Right ventricle myocardium inferior (tissue), 1 donor: ENCODE measurements at regions of chr12 and their contacts with region 1.

Region 1: GRCh38 chr12:110742718-110743570 is at the start of gene PPP1CC:
- DNase-seq: peak; percentile 98
- ATAC-seq: peak; percentile 97
- total RNA-seq, gene PPP1CC: 163 TPM

Region 2: DNA sequence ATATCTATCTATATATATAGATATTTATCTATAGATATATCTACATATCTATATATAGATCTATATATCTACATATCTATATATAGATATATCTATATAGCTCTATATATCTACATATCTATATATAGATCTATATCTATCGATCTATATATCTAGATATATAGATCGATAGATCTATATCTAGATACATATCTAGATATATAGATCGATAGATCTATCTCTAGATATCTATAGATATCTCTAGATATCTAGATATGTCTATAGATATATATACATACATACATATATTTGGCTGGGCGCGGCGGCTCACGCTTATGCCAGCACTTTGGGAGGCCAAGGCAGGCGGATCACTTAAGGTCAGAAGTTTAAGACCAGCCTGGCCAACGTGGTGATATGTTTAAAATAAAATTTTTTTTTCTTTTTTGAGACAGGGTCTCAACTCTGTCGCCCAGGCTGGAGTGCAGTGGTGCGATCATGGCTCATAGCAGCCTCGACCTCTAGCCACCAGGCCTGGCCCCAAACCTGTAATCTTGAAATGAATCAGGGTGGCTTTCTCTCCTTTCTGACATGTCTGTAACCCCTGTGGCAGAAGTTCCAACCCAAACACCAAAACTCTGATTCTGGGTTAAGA is 310.9 kb before region 1 on chr12:
- intact Hi-C with region 1: no loop called
- DNase-seq: no peak
- ATAC-seq: no peak

Region 3: GRCh38 chr12:110639336-110640141 is 103.4 kb before region 1 on chr12:
- intact Hi-C with region 1: loop called (anchors 5 kb)
- DNase-seq: no peak
- ATAC-seq: no peak

Region 4: DNA sequence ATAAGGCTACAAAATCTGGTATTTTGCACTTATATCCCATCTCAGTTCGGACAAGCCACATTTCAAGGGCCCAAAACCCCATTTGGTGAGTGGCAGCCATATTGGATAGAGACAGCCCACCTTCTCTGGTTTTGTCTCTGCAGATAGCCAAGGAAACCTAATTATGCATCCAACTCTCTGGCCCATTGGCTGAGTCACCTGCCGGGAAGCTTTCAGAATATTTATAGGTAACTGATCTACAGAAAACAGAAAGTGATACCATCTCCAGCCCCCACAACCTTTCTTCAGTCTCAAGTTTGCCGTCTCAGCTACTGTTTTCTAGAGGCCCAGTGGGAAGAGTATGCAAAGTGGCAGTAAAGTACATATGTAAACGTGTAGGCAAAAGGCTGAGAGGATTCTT is 33.5 kb after region 1 on chr12:
- intact Hi-C with region 1: no loop called
- DNase-seq: no peak
- ATAC-seq: no peak

Region 5: DNA sequence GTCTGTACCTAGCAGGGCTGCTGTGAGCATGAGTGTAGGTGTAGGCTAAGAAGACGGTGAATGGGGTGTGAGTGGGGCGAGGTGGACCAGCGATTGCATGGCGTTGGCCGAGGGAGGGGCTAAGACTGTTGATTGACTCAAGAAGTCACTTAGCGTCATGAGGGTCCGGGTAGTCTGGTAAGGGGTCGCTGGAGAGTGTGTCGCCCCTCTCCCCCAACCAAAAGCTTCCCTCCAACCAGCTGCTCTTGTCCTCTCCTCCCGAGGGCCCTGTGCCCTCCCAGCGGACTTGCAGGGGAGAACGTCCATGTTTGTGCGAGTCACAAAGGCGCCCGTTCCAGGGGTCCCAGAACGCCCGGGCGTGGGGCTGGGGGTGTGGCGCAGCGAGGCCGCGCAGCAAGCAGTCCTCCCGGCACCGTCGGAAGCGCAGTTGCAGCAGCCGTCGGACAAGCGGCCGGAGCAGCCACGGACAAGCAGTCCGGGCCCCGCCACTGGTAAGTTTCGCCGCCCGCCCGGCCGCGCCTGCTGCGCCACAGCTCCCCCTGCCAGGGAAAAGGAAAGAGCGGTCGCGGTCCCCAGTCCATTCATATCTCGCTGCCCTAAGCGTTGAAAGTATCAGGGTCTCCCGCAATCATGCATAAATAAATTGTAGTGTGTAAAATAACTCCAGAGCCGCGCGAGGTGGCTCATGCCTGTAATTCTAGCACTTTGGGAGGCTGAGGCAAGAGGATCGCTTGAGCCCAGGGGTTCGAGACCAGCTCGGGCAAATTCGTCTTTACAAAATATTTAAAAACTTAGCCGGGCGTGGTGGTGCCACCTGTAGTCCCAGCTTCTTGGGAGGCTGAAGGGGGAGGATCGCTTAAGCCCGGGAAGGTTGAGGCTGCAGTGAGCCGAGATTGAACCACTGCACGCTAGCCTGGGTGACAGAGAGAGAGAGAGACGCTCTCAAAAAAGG is 103.9 kb after region 1 on chr12 and contains the start of gene CCDC63:
- intact Hi-C with region 1: loop called (anchors 2 kb)
- DNase-seq: peak; percentile 77
- ATAC-seq: peak; percentile 35
- total RNA-seq, gene CCDC63: not detected

Region 6: DNA sequence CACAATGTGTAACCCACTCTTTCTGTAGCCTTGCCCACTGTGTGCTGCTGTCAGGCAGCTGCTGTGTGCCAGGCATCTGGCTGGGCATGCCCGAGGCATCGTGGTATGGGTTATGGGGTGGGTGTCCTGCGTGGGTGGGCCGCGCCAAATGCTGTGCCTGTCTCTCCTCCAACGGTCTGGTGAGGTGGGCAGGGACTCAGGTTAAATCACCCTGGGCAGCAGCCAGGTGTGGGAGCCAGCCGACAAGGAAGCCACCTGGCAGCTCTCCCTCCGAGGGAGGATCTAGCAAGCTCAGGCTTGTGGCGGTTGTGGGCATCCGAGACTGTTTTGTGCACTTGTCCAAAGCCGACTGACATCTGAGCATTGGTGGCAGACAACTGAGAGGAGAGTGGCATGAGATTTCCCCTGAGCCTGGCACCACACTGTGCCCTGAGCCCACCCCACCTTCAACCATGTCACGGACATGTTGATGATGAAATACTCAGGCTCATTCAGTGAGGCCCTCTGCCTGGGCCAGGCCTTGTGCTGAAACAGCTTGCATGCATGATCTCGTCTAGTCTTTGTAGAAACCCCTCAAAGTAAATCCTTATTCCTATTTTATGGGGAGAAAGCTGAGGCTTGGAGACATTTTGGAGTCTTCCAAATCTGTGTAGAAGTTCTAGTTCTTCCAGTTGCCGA is 359.3 kb after region 1 on chr12:
- intact Hi-C with region 1: no loop called
- DNase-seq: no peak
- ATAC-seq: no peak